ENCODE measurements at regions of chr17 and their contacts with region 1.

Region 1: DNA sequence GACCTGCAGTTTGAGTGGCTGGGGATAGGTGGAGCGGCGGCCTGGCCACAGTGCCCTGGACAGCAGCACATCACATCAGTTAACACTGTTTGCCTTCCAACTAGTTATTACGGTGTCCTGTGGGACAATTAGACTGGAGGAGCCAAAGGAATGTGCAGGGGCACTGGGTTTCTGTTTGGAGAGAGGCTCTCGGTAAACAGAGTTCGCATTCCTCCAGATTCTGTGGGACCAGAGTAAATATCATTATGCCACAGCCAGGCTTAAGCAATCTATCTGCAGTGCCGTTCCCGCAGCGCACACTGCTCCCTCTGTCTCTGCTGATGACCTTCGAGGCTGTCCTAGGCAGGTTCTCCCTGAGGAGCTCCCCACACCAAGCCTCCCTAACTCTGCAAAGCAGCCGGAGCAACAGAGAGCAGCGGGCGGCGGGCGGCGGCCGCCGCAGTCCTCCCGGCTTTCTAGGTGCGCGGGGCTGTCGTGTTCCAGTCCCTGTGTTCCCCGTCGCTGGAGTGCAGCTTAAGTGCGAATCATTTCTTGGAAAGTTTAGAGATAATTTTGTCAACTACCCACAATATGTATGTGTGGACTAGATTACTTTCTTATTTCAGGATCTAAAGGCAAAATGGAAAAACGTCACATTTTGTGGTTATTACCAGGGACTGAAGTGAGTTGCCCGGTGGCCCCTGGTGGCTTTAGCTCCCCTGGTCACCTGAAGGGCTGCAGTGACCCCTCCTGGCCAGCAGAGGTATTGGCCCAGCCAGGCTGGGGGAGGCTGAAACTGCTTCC is 43.2 kb downstream of the PGS1 start:
- DNase-seq: peak; percentile 83
- ATAC-seq: peak; percentile 89
- H3K4me3 Mint-ChIP-seq: no peak overlapping the region
- H3K27ac Mint-ChIP-seq: no peak overlapping the region
- H3K4me1 Mint-ChIP-seq: peaks cover 25% of the 10 kb centered on the region
- H3K27me3 Mint-ChIP-seq: no peaks in the 10 kb centered on the region

Region 2: DNA sequence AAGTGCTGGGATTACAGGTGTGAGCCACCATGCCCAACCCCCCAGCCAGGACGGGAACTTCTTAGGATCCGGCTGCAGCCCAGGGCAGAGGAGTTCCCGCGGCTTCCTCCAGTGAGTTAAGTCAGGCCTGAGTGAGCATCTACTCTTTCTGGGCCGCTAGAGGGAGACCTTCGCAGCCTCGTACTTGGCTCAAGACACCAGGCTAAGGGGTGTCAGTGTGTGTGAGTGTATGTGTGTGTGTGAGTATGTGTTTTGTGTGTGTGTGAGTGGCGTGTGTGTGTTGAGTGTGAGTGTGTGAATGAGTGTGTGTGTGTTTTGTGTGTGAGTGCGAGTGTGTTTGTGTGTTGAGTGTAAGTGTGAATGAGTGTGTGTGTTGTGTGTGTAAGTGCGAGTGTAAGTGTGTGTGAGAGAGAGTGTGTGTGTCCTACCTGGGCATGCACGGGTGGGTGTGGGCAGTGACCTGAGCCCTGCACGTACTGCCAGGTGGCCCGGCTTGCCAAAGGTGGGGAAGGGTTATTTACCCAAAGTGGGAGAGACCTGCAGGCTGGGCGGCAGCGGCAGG is 131.8 kb before region 1 on chr17:
- CTCF ChIA-PET with region 1: interaction called, 47 read pairs
- DNase-seq: peak; percentile 84
- ATAC-seq: peak; percentile 99
- H3K4me3 Mint-ChIP-seq: no peak overlapping the region
- H3K27ac Mint-ChIP-seq: no peak overlapping the region
- H3K4me1 Mint-ChIP-seq: no peaks in the 10 kb centered on the region
- H3K27me3 Mint-ChIP-seq: no peaks in the 10 kb centered on the region

Region 3: DNA sequence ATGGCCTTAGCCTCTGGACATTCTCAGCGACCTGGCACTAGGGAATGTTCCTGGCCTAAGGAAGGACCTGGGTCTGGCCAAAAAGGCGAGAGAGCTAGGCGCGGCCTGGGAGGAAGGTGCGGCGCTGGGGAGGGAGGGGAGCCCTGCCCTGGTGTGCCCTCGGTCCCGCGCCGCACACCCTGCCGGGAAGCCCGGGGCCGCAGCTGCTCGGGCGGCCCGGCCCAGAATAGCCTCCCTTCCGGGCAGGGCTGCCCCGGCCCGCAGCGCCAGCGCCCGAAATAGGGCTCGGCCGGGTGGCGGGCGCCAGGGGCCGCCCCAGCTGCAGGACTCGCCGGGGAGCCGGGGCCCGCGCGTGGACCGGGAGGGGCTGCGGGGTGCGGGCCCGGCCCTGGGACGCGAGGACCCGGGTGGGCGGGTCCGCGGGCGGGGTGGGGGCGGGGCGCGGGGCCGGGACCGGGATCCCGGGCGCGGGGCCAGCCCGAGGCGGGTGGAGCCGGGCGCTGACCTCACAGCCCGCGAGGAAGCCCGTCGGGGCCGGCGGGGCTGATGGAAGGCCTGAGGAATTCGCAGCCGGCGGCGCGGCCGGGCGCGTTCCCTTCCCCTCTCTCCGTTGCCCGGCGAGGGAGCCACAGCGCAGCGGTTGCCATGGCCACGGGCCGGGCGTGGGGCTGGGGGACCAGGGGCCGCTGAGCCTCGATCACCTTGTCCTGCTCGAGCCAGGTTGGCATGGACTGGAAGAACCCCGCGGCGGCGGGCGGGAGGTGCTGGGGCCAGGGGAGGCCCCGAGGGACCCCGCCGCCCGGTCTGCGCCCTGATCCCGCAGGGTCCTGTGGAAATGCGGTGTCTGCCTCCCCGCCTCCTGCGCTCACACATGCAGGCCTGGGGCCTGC is 79.9 kb before region 1 on chr17:
- CTCF ChIA-PET with region 1: interaction called, 15 read pairs
- DNase-seq: no peak
- ATAC-seq: peak; percentile 26
- H3K4me3 Mint-ChIP-seq: no peak overlapping the region
- H3K27ac Mint-ChIP-seq: no peak overlapping the region
- H3K4me1 Mint-ChIP-seq: peaks cover 26% of the 10 kb centered on the region
- H3K27me3 Mint-ChIP-seq: peaks cover 20% of the 10 kb centered on the region

Region 4: DNA sequence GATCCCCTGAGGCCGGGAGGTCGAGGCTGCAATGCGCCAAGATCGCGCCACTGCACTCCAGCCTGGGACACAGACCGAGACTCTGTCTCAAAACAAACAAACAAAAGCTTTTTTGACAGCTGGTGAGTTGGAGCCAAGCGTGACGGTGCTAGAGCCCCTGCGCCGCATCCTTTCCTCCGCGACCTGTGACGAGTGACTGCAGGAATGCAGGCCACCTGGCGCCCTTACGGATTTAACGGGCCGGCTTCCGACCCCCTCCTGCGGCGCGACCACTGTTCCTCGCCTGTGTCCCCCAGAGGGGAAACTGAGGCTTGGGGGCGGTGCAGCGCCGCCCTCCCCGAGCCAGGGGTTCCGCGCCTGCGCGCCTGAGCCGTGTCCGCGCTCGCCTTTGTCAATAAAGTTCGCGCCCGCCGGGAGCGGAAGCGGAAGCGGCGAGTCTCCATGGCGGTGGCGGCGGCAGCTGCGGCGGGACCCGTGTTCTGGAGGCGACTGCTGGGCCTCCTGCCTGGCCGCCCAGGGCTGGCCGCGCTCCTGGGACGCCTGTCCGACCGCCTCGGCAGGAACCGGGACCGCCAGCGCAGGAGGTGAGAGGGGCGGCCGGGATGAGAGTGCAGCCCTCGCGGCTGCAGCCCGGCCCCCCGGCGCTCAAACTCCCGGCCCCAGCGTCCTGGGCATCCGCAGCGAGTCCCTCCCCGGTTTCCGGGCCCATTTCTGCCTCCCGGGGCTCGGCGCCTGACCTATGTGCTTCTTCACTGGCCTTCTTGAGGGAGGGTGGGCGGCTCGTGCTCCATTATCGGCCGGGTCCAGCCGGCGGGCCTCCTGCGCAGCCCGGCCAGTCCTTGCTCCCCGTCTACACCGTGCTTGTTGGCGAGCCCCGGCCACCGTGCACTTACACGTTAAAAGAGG is 43.2 kb before region 1 on chr17 and contains the start of gene PGS1:
- CTCF ChIA-PET with region 1: interaction called, 26 read pairs
- DNase-seq: peak; percentile 89
- ATAC-seq: peak; percentile 67
- H3K4me3 Mint-ChIP-seq: peak within 1 kb of the TSS; percentile 89
- H3K27ac Mint-ChIP-seq: peak within 1 kb of the TSS; percentile 89
- H3K4me1 Mint-ChIP-seq: peaks cover 50% of the 10 kb centered on the region
- H3K27me3 Mint-ChIP-seq: peaks cover 3% of the 10 kb centered on the region
- total RNA-seq, gene PGS1: 52.2 to 70.2 TPM

Measured in activated CD8-positive, alpha-beta memory T cell treated with anti-CD3 and anti-CD28 coated beads, Interleukin-2, amount 10 ng/mL, durations not matched to agents 7 days and 5 days (primary cell).